B cell (primary cell): ENCODE measurements at regions of chr10 and their contacts with region 1.

Region 1: DNA sequence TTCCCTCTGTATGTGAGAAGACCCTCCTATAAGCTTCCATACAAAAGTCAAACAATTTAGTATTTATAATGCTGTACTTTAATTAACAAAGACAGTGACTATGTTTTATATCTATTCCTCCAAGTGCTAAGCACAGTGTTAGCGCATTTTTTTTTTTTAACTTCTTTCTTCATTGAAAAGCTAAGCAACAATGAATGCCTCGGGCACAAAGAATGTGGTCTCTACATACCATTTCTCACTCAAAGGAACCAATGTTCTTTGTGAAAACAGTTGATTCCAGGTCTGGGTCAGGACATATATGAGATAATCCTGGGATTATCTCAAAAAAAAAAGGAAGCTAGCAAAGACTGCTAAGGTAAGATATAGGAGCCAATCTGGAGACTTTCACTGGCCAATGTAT is 26.2 kb upstream of the REEP3 start:
- DNase-seq: no peak
- ATAC-seq: no peak
- H3K4me3 ChIP-seq: no peak overlapping the region
- H3K4me3 Mint-ChIP-seq: no peak overlapping the region
- H3K27ac ChIP-seq: no peak overlapping the region
- H3K27ac Mint-ChIP-seq: no peak overlapping the region
- H3K4me1 ChIP-seq: no peaks in the 10 kb centered on the region
- H3K4me1 Mint-ChIP-seq: peaks cover 26% of the 10 kb centered on the region
- H3K27me3 ChIP-seq: no peaks in the 10 kb centered on the region
- H3K27me3 Mint-ChIP-seq: no peaks in the 10 kb centered on the region
- CTCF ChIP-seq: no peak

Region 2: GRCh38 chr10:63521416-63522276 is 26.7 kb after region 1 on chr10:
- CTCF ChIA-PET with region 1: no interaction called
- POLR2A ChIA-PET with region 1: no interaction called
- intact Hi-C with region 1: no loop called
- DNase-seq: peak; percentile 91
- ATAC-seq: peak; percentile 62
- H3K4me3 ChIP-seq: peak overlapping the region; percentile 46 to 89 (median 82)
- H3K4me3 Mint-ChIP-seq: peak overlapping the region; percentile 91
- H3K27ac ChIP-seq: peak overlapping the region; percentile 75 to 79
- H3K27ac Mint-ChIP-seq: peak overlapping the region; percentile 89
- H3K4me1 ChIP-seq: peaks cover 6 to 17% of the 10 kb centered on the region in 2 donors
- H3K4me1 Mint-ChIP-seq: peaks cover 39% of the 10 kb centered on the region
- H3K27me3 ChIP-seq: no peaks in the 10 kb centered on the region
- H3K27me3 Mint-ChIP-seq: no peaks in the 10 kb centered on the region
- CTCF ChIP-seq: no peak

Region 3: GRCh38 chr10:63542835-63543575 is 48.1 kb after region 1 on chr10:
- CTCF ChIA-PET with region 1: no interaction called
- POLR2A ChIA-PET with region 1: no interaction called
- intact Hi-C with region 1: loop called (anchors 5 kb)
- DNase-seq: no peak
- ATAC-seq: no peak
- H3K4me3 ChIP-seq: no peak overlapping the region
- H3K4me3 Mint-ChIP-seq: no peak overlapping the region
- H3K27ac ChIP-seq: no peak overlapping the region
- H3K27ac Mint-ChIP-seq: no peak overlapping the region
- H3K4me1 ChIP-seq: no peaks in the 10 kb centered on the region
- H3K4me1 Mint-ChIP-seq: peaks cover 3% of the 10 kb centered on the region
- H3K27me3 ChIP-seq: no peaks in the 10 kb centered on the region
- H3K27me3 Mint-ChIP-seq: no peaks in the 10 kb centered on the region
- CTCF ChIP-seq: no peak